Dendritic cell treated with granulocyte-macrophage colony-stimulating factor and Interleukin-4, amounts not matched to agents 40 ng/mL and 50 ng/mL, for 4 days (primary cell): ENCODE measurements at regions of chr15 and their contacts with region 1.

Region 1: DNA sequence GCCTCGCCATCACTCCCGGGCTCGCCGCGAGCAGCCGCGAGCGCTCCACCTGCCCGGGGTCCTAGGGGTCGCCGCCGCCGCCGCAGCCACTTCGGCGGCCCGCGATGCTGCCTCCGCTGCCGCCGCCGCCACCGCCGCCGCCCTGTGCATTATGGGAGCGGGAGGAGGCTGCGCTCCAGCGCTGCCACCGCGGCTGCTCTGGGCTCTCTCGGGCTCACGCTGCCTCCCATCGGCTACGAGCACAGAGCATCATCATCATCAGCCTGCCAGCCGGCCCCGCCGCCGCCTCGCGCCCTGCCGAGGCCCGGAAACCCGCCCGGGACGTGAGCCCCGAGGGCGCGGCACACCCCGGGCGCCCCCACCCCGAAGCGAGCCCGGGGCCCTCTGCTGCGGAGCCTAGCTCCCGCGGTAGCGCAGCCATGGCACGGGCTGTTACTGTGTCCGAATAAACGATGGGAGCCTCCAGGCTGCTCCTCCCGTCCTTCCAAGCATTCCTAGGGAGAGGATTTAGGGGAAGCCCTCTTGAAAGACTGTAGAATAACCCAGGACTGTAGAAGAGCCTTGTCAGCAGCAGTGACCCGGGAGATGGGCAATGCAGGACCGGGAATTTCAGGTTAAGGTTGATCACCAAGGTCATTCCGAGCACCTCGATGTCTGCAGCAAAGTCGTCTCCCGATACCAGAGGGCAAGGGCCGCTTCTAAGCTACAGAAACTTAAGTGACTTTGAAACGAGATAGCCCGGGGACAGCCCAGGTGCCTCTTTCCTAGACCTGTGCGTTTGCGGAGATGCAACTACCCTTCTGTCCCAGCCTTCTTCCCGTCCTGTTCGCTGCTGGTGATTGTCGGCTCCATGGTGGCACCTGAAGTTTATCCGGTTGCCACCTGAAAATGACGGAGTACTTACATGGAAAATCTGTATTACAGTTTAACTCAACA is 579 bp upstream of the MYO5A start:
- H3K4me3 Mint-ChIP-seq: peak overlapping the region; percentile 73
- H3K27ac Mint-ChIP-seq: peak overlapping the region; percentile 92
- H3K4me1 Mint-ChIP-seq: peaks cover 41% of the 10 kb centered on the region
- H3K27me3 Mint-ChIP-seq: peaks cover 17% of the 10 kb centered on the region

Region 2: DNA sequence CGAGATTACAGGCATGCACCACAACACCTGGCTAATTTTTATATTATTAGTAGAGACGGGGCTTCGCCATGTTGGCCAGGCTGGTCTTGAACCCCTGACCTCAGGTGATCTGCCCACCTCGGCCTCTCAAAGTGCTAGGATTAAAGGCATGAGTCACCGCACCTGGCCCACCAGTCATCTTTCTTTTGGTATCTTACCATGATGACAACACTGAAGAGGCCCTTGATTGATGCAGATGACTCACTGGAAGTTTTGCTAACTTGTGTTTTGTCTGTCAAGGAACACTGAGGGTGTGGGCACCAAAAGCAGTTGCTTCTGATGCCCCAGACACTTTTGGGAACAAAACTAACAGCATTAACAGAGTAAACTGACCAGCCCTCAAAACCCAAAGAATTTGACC is 88.9 kb before region 1 on chr15:
- intact Hi-C with region 1: loop called (anchors 10 kb)
- H3K4me3 Mint-ChIP-seq: no peak overlapping the region
- H3K27ac Mint-ChIP-seq: peak overlapping the region; percentile 80
- H3K4me1 Mint-ChIP-seq: peaks cover 66% of the 10 kb centered on the region
- H3K27me3 Mint-ChIP-seq: no peaks in the 10 kb centered on the region

Region 3: GRCh38 chr15:52466134-52466701 is 63.0 kb before region 1 on chr15:
- intact Hi-C with region 1: loop called (anchors 1 kb)
- H3K4me3 Mint-ChIP-seq: peak overlapping the region; percentile 56
- H3K27ac Mint-ChIP-seq: peak overlapping the region; percentile 85
- H3K4me1 Mint-ChIP-seq: peaks cover 57% of the 10 kb centered on the region
- H3K27me3 Mint-ChIP-seq: no peaks in the 10 kb centered on the region

Region 4: DNA sequence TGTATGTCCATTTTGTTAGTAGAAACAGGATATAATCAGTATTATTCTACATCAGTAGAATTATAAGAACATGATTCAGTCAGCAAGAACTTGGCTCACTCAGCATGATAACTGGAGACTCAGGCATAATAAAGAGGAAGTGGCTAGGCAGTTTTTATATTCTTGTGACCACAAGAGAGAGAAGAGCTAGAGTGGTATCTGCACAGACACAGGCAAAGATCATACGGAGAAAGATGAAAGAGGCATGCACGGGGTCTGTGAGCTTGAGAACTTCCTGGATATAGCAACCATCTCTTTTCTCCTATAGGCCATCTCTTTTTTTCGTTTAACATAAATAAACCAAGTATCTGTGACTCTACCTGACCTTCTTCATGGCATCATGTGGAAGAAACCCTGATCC is 47.3 kb before region 1 on chr15:
- intact Hi-C with region 1: loop called (anchors 5 kb)
- H3K4me3 Mint-ChIP-seq: no peak overlapping the region
- H3K27ac Mint-ChIP-seq: peak overlapping the region; percentile 87
- H3K4me1 Mint-ChIP-seq: peaks cover 81% of the 10 kb centered on the region
- H3K27me3 Mint-ChIP-seq: no peaks in the 10 kb centered on the region

Region 5: GRCh38 chr15:52568601-52569256 is 39.5 kb after region 1 on chr15 and contains the start of gene ARPP19:
- intact Hi-C with region 1: loop called (anchors 5 kb)
- H3K4me3 Mint-ChIP-seq: peak within 1 kb of the TSS; percentile 90
- H3K27ac Mint-ChIP-seq: peak within 1 kb of the TSS; percentile 98
- H3K4me1 Mint-ChIP-seq: peaks cover 13% of the 10 kb centered on the region
- H3K27me3 Mint-ChIP-seq: no peaks in the 10 kb centered on the region